GM12878 (cell line): ENCODE measurements at regions of chr13 and their contacts with region 1.

Region 1: GRCh38 chr13:42271337-42272114 is 426 bp upstream of the AKAP11 start:
- DNase-seq: peak; percentile 94
- ATAC-seq: peak; percentile 83
- H3K4me3 ChIP-seq: peak overlapping the region; percentile 90
- H3K27ac ChIP-seq: peak overlapping the region; percentile 77
- H3K4me1 ChIP-seq: peaks cover 12% of the 10 kb centered on the region
- H3K27me3 ChIP-seq: no peaks in the 10 kb centered on the region
- CTCF ChIP-seq: no peak
- EP300 ChIP-seq: peak in 1 of 2 experiments; percentile 65; a peak in 1 of 4 replicates
- POLR2A ChIP-seq: no peak
- RAD21 ChIP-seq: no peak

Region 2: GRCh38 chr13:40982772-40983171 is 1288.8 kb before region 1 on chr13:
- CTCF ChIA-PET with region 1: no interaction called
- POLR2A ChIA-PET with region 1: no interaction called
- RAD21 ChIA-PET with region 1: no interaction called
- SMC1A ChIA-PET with region 1: no interaction called
- in situ Hi-C with region 1: no loop called
- intact Hi-C with region 1: loop called (anchors 10 kb)
- DNase-seq: peak; percentile 84
- ATAC-seq: peak; percentile 53
- H3K4me3 ChIP-seq: peak overlapping the region; percentile 16; the same call in 1 of the 2 replicates
- H3K27ac ChIP-seq: peak overlapping the region; percentile 82
- H3K4me1 ChIP-seq: peaks cover 16% of the 10 kb centered on the region
- H3K27me3 ChIP-seq: no peaks in the 10 kb centered on the region
- CTCF ChIP-seq: no peak
- EP300 ChIP-seq: peak; percentile 22 to 59; a peak in 1 of 4 replicates
- POLR2A ChIP-seq: no peak
- RAD21 ChIP-seq: no peak

Region 3: DNA sequence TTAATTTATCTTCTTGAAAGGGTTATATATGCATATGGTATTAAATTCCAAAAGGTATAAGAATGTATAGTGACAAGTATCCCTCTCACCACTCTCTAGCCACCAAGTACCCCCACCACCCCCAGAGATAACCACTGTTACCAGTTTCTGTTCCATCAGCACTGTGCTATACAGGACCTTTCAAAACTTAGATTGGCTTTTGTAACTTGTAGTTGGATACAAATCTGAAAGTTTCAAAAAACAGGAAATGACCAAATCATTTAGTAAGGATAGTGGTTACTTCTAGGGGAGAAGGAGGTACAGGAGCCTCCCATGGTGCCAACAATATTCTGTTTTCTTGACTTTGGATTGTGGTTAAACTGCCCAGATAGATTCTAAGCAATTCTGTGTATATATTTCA is 57.1 kb after region 1 on chr13:
- CTCF ChIA-PET with region 1: interaction called, 3 read pairs
- POLR2A ChIA-PET with region 1: interaction called, 3 read pairs
- RAD21 ChIA-PET with region 1: interaction called, 12 read pairs
- SMC1A ChIA-PET with region 1: interaction called, 4 read pairs
- in situ Hi-C with region 1: no loop called
- intact Hi-C with region 1: no loop called
- DNase-seq: no peak
- ATAC-seq: peak; percentile 90
- H3K4me3 ChIP-seq: no peak overlapping the region
- H3K27ac ChIP-seq: peak overlapping the region; percentile 45; the same call in 1 of the 2 replicates
- H3K4me1 ChIP-seq: peaks cover 12% of the 10 kb centered on the region
- H3K27me3 ChIP-seq: no peaks in the 10 kb centered on the region
- CTCF ChIP-seq: no peak
- EP300 ChIP-seq: no peak
- POLR2A ChIP-seq: no peak
- RAD21 ChIP-seq: no peak

Region 4: GRCh38 chr13:42497798-42498197 is 226.3 kb after region 1 on chr13:
- CTCF ChIA-PET with region 1: no interaction called
- POLR2A ChIA-PET with region 1: no interaction called
- RAD21 ChIA-PET with region 1: no interaction called
- SMC1A ChIA-PET with region 1: interaction called, 5 read pairs
- in situ Hi-C with region 1: no loop called
- intact Hi-C with region 1: loop called (anchors 5 kb)
- DNase-seq: peak; percentile 88
- ATAC-seq: peak; percentile 90
- H3K4me3 ChIP-seq: no peak overlapping the region
- H3K27ac ChIP-seq: peak overlapping the region; percentile 85
- H3K4me1 ChIP-seq: peaks cover 33% of the 10 kb centered on the region
- H3K27me3 ChIP-seq: no peaks in the 10 kb centered on the region
- CTCF ChIP-seq: no peak
- EP300 ChIP-seq: peak in 1 of 2 experiments; percentile 69; a peak in 1 of 4 replicates
- POLR2A ChIP-seq: no peak
- RAD21 ChIP-seq: peak; percentile 36; the same call in 1 of the 2 replicates

Region 5: DNA sequence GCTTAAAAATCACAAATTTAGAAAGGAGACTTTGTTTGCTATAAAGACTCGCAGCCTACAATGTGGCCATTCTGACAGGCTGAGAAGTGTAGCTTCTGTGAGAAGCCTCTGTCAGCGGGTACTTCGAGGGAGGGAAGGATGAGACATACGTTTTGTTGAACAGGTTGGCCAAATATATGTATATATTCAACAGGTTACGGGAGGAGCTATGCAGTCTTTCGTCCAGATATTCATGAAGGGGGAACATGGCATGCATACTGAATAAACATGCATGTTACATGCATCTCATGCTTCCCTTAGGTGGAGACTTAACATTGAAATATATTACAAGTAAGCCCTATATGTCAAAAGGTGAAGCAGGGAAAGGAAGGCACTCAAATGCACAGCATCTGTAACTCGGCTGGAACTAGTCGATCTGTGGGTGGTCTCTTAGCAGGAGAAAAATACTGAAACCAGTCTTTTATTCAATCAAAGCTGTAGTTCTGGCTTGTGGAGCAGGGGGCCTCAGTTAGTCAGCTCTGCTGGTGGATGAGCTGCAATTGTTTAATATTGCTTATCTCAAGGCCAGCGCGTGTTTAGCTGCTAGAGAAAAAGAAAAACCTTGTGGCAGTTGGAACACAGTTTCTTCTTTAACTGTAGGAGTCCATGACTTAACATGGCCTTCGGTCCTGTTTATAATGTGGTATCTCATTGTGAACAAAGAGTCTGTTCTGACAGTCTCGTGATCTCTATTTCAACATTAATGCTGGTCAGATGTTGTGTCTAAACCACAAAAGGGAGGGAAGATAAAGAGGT is 604.1 kb after region 1 on chr13:
- CTCF ChIA-PET with region 1: no interaction called
- POLR2A ChIA-PET with region 1: no interaction called
- RAD21 ChIA-PET with region 1: no interaction called
- SMC1A ChIA-PET with region 1: no interaction called
- in situ Hi-C with region 1: no loop called
- intact Hi-C with region 1: loop called (anchors 5 kb)
- DNase-seq: no peak
- ATAC-seq: peak; percentile 46; the same call in 2 of the 3 replicates
- H3K4me3 ChIP-seq: no peak overlapping the region
- H3K27ac ChIP-seq: peak overlapping the region; percentile 76
- H3K4me1 ChIP-seq: peaks cover 14% of the 10 kb centered on the region
- H3K27me3 ChIP-seq: no peaks in the 10 kb centered on the region
- CTCF ChIP-seq: peak; percentile 3 to 9 (median 4); a peak in 1 of 6 replicates
- EP300 ChIP-seq: no peak
- POLR2A ChIP-seq: no peak
- RAD21 ChIP-seq: peak; percentile 40